Activated CD8-positive, alpha-beta memory T cell treated with anti-CD3 and anti-CD28 coated beads, Interleukin-2, amount 10 ng/mL, durations not matched to agents 7 days and 5 days (primary cell): ENCODE measurements at regions of chr3 and their contacts with region 1.

Region 1: DNA sequence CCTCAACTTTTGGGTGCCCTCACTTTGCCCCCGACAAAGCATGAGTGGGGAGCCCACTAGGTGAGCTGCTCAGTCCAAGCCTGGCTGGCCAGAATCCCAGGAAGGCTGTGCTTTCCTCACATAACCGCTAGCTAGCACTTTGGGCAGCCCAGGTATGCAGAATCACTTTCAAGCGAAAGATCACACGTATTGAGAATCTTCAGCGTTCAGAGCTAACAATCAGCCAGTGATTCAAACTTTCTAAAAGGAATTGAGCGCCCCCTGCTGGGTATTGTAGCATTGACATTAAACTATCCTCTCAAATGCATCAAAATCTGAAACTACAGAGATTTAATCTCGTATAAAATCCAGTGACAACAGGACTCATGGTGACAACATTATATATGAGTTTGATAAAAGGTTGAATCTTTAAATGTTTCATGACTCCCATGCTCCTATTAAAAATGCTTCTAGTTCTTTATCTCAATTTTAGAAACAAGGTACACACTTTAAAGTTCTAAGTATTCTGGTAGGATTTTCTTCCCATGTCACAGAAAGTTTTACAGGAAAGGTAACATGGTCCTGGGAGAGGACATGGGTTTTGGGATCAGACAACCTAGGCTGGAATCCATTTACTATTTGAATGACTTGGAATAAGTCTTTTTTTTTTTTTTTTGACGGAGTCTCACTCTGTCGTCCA is 11.8 kb downstream of the ANAPC13 start:
- DNase-seq: peak; percentile 79
- ATAC-seq: peak; percentile 77
- H3K4me3 Mint-ChIP-seq: no peak overlapping the region
- H3K27ac Mint-ChIP-seq: no peak overlapping the region
- H3K4me1 Mint-ChIP-seq: no peaks in the 10 kb centered on the region
- H3K27me3 Mint-ChIP-seq: no peaks in the 10 kb centered on the region

Region 2: DNA sequence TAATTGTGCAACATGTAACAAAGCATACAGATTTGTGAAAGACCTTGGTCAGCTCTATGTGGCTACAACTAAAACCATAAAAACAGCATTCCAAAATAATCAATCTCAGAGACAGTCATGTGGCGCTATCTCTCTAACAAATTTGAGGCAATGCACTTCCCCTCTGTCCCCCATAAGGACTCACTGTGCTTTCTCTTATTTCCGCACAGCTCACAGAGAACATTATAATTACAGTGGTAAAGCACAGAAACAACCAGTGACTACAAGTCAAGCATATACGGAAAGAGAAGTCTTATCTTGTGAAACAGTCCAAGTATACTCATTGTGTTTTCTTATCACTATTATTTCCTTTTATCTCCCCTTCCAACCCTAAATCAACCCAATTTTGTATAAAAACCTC is 287.6 kb before region 1 on chr3:
- CTCF ChIA-PET with region 1: no interaction called
- DNase-seq: no peak
- ATAC-seq: no peak
- H3K4me3 Mint-ChIP-seq: no peak overlapping the region
- H3K27ac Mint-ChIP-seq: no peak overlapping the region
- H3K4me1 Mint-ChIP-seq: no peaks in the 10 kb centered on the region
- H3K27me3 Mint-ChIP-seq: no peaks in the 10 kb centered on the region

Region 3: GRCh38 chr3:134299185-134299887 is 174.7 kb before region 1 on chr3:
- CTCF ChIA-PET with region 1: interaction called, 18 read pairs
- DNase-seq: no peak
- ATAC-seq: no peak
- H3K4me3 Mint-ChIP-seq: no peak overlapping the region
- H3K27ac Mint-ChIP-seq: no peak overlapping the region
- H3K4me1 Mint-ChIP-seq: no peaks in the 10 kb centered on the region
- H3K27me3 Mint-ChIP-seq: peaks cover 55% of the 10 kb centered on the region

Region 4: DNA sequence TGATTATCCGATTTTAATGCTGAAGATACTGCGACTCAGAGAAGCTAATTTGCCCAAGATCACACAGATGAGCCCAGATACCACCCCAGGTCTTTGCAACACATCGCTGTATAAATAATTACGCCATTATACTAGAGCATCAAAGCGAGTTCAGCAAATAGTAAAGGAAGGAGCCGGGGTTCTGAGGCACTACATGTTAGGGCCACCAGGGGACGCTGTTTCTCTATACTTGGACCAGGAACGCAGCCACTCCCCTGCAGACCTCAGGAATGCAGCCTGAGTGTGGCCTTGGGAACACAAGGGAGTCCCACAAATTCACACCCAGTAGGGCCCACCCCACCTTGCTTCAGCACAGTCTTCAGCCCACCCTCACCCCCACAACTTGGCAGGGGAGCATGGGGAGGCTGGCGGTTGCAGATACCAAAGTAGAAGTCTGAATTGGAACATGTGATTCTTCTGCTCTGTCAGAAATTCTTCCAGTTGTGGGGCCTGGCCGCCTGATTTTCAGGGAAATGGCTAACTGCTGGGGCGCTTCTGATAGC is 165.6 kb before region 1 on chr3:
- CTCF ChIA-PET with region 1: interaction called, 68 read pairs
- DNase-seq: peak; percentile 74
- ATAC-seq: peak; percentile 82
- H3K4me3 Mint-ChIP-seq: no peak overlapping the region
- H3K27ac Mint-ChIP-seq: no peak overlapping the region
- H3K4me1 Mint-ChIP-seq: peaks cover 3% of the 10 kb centered on the region
- H3K27me3 Mint-ChIP-seq: peaks cover 76% of the 10 kb centered on the region

Region 5: DNA sequence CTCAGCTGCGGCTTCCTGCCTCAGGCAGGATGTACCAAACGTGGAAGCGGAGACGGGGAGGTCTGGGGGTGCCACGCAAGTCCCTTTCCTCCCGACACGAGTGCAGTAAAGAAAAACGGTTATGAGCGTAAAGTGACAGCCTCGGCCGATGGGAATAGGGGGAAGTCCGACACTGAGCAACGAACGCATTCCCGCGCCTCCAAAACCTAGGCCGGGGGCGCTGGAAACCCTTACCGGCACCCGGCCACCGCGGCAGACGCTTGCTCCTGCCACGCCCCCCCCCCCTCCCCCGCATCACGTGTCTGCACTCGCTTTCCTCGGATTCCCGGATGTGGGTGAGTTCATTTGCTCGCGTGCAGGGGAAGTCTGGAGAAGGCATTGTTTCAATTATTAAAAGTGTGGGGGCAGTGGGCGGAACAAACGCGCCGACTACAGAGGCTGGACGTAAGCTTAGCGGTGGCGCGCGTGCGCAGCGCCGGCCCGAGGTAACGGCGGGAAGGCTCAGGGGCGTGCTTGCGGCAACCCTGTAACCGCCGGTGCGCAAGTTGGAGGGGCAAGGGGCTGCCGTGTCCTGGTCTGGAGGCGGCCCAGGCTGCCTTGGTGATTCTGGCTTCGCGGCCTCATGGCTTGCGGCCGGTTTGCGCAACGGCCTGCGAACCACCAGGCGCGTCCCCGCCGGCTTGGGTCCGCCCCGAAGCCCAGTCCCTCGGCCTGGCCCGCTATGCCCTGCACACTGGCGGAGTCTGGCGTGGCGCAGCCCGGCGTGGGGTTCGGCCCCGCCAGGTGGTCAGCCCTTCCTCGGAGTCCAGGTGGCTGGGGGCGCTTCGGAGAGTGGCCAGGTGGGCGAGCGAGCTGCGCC is 11.9 kb after region 1 on chr3 and contains the starts of genes ANAPC13 and CEP63:
- CTCF ChIA-PET with region 1: interaction called, 43 read pairs
- DNase-seq: peak; percentile 97
- ATAC-seq: peak; percentile 90
- H3K4me3 Mint-ChIP-seq: peak within 1 kb of the TSS; percentile 86
- H3K27ac Mint-ChIP-seq: peak within 1 kb of the TSS; percentile 91
- H3K4me1 Mint-ChIP-seq: peaks cover 39% of the 10 kb centered on the region
- H3K27me3 Mint-ChIP-seq: no peaks in the 10 kb centered on the region
- total RNA-seq, gene ANAPC13: 10.8 to 15.1 TPM
- total RNA-seq, gene CEP63: 17.8 to 25.8 TPM

Region 6: GRCh38 chr3:134517791-134518190 is 43.8 kb after region 1 on chr3:
- CTCF ChIA-PET with region 1: no interaction called
- DNase-seq: no peak
- ATAC-seq: no peak
- H3K4me3 Mint-ChIP-seq: no peak overlapping the region
- H3K27ac Mint-ChIP-seq: no peak overlapping the region
- H3K4me1 Mint-ChIP-seq: peaks cover 5% of the 10 kb centered on the region
- H3K27me3 Mint-ChIP-seq: no peaks in the 10 kb centered on the region